ENCODE measurements at regions of chr1 and their contacts with region 1.

Region 1: GRCh38 chr1:14571819-14572767 is 26.4 kb upstream of the KAZN start:
- DNase-seq: peak; percentile 14 to 65
- H3K4me3 ChIP-seq: no peak overlapping the region
- H3K4me1 ChIP-seq: no peaks in the 10 kb centered on the region
- H3K27me3 ChIP-seq: no peaks in the 10 kb centered on the region

Region 2: DNA sequence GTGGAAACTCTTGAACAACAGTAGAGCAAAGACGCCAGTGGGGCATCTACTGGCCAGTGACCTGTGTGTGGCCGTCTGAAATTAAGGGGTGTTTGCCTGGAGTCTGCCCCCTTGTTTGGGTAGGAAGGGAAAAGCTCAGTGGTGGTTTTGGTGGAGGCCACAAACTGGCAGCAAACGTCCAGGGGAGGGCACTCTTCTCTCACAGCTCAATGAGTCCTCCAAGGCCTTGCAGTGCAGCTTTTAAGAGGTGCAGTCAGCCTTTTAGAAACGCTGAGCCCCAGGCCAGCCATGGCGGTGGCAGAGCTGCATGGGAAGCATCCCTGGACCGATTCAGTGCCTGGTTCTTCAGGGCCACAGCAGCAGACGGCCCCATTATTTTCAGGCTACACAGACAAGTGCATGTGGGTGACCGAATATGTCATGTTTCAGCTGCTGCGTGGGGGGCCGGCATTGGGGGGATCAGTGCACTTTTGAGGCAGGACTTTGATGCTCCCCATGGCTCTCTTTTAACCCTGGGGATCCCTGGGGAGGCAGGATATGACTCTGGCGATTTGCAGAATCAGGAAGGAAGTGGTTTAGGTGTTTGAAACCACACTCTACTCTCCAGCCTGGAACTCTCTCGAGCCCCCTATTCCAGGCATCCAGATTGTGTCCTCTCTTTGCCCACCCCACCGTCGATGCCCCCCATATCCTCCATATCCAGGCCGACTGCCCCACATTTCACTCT is 458.1 kb before region 1 on chr1:
- in situ Hi-C with region 1: loop called (anchors 25 kb)
- DNase-seq: peak; percentile 6 to 53
- H3K4me3 ChIP-seq: no peak overlapping the region
- H3K4me1 ChIP-seq: no peaks in the 10 kb centered on the region
- H3K27me3 ChIP-seq: no peaks in the 10 kb centered on the region

Region 3: GRCh38 chr1:14507262-14507661 is 64.8 kb before region 1 on chr1:
- in situ Hi-C with region 1: no loop called
- DNase-seq: no peak
- H3K4me3 ChIP-seq: no peak overlapping the region
- H3K4me1 ChIP-seq: peaks cover 20% of the 10 kb centered on the region
- H3K27me3 ChIP-seq: no peaks in the 10 kb centered on the region